Activated T-helper 2 cell treated with anti-CD3 and anti-CD28 coated beads, Interferon-gamma antibody, Interleukin-2, Interleukin-4, amounts not matched to agents 10 μg/mL and 5 μg/mL and 100 μg/mL, durations not matched to agents 14 hours and 24 hours and 36 hours (primary cell): ENCODE measurements at regions of chr6 and their contacts with region 1.

Region 1: DNA sequence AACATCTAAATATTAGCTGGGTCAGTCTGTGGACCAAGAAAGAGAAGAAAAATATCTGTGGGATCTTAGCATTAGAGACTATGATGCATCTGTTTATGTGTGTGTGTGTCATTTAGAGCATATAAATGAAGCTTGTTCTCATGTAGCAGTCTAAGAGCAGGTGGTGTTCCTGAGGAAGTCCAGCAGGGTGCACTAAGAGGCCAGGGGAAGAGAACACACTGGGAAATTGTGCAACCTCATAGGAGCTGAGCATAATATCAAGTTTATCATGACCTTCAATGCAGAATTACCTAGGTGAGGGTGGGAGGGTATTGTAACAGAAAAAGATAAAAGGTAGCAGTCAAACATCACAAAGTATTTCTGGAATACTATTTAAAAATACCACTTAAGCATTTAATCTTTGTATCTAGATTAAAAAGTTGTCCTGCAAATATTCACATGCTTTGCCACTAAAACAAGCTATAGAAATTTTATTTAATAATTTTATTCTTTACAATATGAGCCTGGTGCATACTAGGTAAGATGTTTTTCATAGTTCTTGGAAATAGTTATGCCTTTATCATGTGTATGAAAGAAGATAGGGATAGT is 80.5 kb downstream of the SMPDL3A start:
- DNase-seq: no peak
- H3K4me3 Mint-ChIP-seq: no peak overlapping the region
- H3K27ac Mint-ChIP-seq: no peak overlapping the region
- H3K4me1 Mint-ChIP-seq: no peaks in the 10 kb centered on the region
- H3K27me3 Mint-ChIP-seq: no peaks in the 10 kb centered on the region

Region 2: GRCh38 chr6:123316733-123317323 is 447.3 kb after region 1 on chr6:
- intact Hi-C with region 1: loop called (anchors 2 kb)
- DNase-seq: no peak
- H3K4me3 Mint-ChIP-seq: no peak overlapping the region
- H3K27ac Mint-ChIP-seq: no peak overlapping the region
- H3K4me1 Mint-ChIP-seq: no peaks in the 10 kb centered on the region
- H3K27me3 Mint-ChIP-seq: no peaks in the 10 kb centered on the region